ENCODE measurements at regions of chr10 and their contacts with region 1.

Region 1: DNA sequence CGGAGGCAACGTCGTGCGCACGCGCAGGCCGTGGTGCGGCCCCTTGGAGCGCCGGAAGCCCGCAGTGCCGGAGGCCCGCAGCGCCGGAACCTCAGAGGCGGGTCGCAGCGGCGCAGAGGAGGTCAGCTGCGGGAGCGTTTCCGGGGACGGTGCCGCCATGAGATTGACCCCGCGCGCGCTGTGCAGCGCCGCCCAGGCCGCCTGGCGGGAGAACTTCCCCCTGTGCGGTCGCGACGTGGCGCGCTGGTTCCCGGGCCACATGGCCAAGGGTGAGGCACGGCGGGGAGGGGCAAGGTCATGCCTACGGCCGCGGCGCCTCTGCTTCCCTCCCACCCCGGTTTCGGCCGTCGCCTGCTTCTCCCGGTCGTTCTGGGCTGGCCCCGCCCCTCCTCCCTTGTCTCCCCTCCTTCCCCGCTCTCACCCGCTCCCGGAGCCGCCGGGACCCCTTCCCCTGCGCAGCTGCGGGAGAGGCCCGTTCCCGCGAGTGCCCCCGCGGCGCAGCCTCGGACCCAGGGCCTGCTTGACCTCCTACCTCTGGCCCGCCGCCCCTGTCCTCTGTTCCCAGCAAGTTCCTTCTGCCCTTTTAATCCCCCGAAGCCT is at the start of gene MTG1:
- DNase-seq: peak; percentile 99
- ATAC-seq: peak; percentile 65
- H3K4me3 Mint-ChIP-seq: peak within 1 kb of the TSS; percentile 88
- H3K27ac Mint-ChIP-seq: peak within 1 kb of the TSS; percentile 81
- H3K4me1 Mint-ChIP-seq: peaks cover 62% of the 10 kb centered on the region
- H3K27me3 Mint-ChIP-seq: no peaks in the 10 kb centered on the region
- CTCF ChIP-seq: no peak
- total RNA-seq, gene MTG1: 67.6 and 83.1 TPM in 2 replicates

Region 2: DNA sequence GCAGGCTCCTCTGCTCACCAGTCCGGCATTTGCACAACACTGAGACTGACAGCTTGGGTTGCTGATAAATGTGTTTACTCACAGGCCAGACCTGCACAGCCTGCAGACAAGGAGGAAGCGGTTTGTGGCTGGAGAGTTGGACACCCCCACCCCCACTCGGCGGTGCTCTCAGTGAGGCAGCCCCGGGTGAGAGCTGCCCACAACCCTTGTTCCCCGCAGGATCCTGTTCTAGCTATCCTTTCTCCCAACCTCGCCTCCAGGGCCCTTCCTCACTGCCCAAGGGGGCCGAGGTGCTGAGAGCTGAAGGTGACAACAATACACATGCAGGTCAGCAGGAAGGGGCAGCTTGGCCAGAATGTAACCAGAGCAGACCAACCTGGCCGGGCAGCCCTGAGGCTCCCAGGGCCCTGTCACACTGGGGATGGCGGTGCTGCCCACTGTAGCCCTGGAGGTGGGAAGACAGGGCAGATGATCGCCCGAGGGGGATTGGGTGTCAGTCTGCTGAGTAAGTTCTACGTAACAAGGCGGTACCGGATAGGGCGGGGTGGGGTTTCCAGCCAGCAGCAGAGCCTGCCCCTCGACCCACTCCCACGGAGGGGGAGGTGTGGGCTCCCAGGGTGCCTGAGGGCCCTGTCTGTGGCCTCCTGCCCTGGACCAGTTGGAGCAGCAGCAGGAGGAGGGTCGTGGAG is 115.4 kb before region 1 on chr10:
- CTCF ChIA-PET with region 1: no interaction called
- POLR2A ChIA-PET with region 1: interaction called, 6 read pairs
- intact Hi-C with region 1: loop called (anchors 1 kb)
- DNase-seq: peak; percentile 44
- ATAC-seq: peak; percentile 10
- H3K4me3 Mint-ChIP-seq: peak overlapping the region; percentile 76
- H3K27ac Mint-ChIP-seq: peak overlapping the region; percentile 80
- H3K4me1 Mint-ChIP-seq: peaks cover 38% of the 10 kb centered on the region
- H3K27me3 Mint-ChIP-seq: no peaks in the 10 kb centered on the region
- CTCF ChIP-seq: no peak

Region 3: GRCh38 chr10:133335246-133336117 is 58.7 kb before region 1 on chr10:
- CTCF ChIA-PET with region 1: no interaction called
- POLR2A ChIA-PET with region 1: interaction called, 3 read pairs
- intact Hi-C with region 1: loop called (anchors 2 kb)
- DNase-seq: peak; percentile 54
- ATAC-seq: peak; percentile 49
- H3K4me3 Mint-ChIP-seq: peak overlapping the region; percentile 65
- H3K27ac Mint-ChIP-seq: no peak overlapping the region
- H3K4me1 Mint-ChIP-seq: peaks cover 6% of the 10 kb centered on the region
- H3K27me3 Mint-ChIP-seq: peaks cover 7% of the 10 kb centered on the region
- CTCF ChIP-seq: no peak

Region 4: GRCh38 chr10:133373104-133373624 is 21.0 kb before region 1 on chr10 and contains the start of gene ECHS1:
- CTCF ChIA-PET with region 1: no interaction called
- POLR2A ChIA-PET with region 1: interaction called, 52 read pairs
- intact Hi-C with region 1: loop called (anchors 1 kb)
- DNase-seq: peak; percentile 96
- ATAC-seq: peak; percentile 96
- H3K4me3 Mint-ChIP-seq: peak within 1 kb of the TSS; percentile 83
- H3K27ac Mint-ChIP-seq: peak within 1 kb of the TSS; percentile 88
- H3K4me1 Mint-ChIP-seq: peaks cover 24% of the 10 kb centered on the region
- H3K27me3 Mint-ChIP-seq: no peaks in the 10 kb centered on the region
- CTCF ChIP-seq: no peak
- total RNA-seq, gene ECHS1: 37.7 and 39.4 TPM in 2 replicates

Region 5: DNA sequence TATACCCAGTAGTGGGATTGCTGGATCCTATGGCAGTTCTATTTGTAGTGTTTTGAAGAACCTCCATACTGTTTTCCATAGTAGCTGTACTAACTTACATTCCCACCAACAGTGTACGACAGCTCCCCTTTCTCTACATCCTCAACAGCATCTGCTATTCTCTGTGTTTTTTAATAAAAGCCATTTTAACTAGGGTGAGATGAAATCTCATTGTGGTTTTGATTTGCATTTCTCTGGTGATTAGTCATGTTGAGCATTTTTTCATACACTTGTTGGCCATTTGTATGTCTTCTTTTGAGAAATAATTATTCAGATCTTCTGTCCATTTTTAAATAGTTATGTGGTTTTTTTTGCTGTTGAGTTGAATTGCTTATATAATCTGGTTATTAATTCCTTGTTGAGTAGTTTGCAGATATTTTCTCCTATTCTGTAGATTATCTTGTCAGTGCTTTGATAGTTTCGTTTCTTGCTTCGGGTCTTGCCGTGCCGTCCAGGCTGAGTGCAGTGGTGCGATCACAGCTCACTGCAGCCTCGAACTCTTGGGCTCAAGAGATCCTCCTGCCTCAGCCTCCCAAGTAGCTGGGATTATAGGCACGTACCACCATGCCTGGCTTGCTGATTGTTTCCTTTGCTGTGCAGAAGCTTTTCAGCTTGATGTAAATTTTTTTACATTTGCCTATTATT is 11.8 kb after region 1 on chr10:
- CTCF ChIA-PET with region 1: interaction called, 3 read pairs
- POLR2A ChIA-PET with region 1: interaction called, 6 read pairs
- intact Hi-C with region 1: loop called (anchors 1 kb)
- DNase-seq: no peak
- ATAC-seq: peak; percentile 36
- H3K4me3 Mint-ChIP-seq: peak overlapping the region; percentile 7
- H3K27ac Mint-ChIP-seq: peak overlapping the region; percentile 51
- H3K4me1 Mint-ChIP-seq: peaks cover 41% of the 10 kb centered on the region
- H3K27me3 Mint-ChIP-seq: no peaks in the 10 kb centered on the region
- CTCF ChIP-seq: no peak

Measured in activated B cell treated with CpG ODN at 0.5 μM for 24 hours (primary cell).